ENCODE measurements at regions of chr12 and their contacts with region 1.

Region 1: DNA sequence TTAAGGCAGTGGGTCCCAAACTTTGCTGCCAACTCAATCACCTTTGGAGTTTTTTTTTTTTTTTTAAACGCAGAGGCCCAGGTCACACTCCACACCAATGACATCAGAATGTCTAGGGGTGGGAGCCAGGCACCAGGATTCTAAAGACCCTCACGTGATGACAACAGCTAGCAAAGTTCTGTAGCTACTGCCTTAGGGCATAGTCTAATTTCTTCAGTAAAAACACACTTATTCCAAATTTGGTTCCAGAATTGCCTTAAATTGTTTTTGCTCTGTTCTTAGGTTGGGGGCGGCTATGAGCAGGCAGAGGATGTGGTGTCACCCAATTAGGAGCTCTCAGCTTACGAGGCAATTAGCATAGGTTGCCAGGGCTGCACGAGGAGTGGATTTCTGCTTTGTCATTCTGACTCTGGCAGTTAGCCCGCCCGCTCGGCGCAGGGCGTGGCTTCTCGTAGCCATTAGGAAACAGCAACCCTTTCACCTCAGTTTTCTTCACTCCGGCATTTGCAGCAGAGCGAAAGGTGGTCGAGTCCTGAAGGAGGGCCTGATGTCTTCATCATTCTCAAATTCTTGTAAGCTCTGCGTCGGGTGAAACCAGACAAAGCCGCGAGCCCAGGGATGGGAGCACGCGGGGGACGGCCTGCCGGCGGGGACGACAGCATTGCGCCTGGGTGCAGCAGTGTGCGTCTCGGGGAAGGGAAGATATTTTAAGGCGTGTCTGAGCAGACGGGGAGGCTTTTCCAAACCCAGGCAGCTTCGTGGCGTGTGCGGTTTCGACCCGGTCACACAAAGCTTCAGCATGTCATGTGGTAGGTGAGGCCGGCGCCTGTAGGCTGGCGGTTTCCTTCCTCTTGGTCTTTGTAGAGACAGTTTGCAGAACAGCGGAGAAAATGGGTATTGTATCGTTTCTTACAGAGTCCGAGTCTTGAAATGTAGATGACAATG is 16.7 kb upstream of the EID3 start:
- DNase-seq: peak; percentile 81

Region 2: DNA sequence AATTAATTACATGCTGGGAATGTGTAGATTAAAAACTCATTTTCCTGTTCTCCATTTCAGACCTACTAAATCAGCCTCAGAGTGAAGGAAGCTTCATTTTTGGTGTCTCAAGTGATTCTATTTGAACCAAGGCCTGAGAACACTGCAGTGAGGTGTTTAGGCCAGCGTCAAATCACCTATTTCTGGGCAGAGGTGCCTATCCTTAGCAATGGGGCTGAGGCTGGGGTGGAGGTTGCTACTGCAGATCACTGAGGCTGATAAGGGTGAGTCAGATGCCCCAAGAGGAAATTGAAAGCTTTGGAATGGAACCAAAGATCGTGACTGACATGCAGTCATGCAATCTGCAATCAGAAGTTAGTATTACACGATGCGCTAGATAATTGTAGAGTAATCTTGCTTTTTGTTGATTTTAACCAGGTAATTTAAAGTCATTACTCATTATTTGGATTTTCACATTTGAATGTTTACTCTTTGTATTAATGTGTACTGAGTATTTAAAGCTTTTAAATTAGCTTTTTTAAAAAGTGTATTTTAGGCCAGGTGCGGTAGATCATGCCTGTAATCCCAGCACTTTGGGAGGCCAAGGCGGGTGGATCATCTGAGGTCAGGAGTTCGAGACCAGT is 66.8 kb before region 1 on chr12:
- CTCF ChIA-PET with region 1: interaction called, 3 read pairs
- POLR2A ChIA-PET with region 1: interaction called, 22 read pairs
- DNase-seq: peak; percentile 37

Region 3: GRCh38 chr12:104276273-104277131 is 10.3 kb before region 1 on chr12:
- CTCF ChIA-PET with region 1: no interaction called
- POLR2A ChIA-PET with region 1: interaction called, 11 read pairs
- DNase-seq: no peak